ENCODE measurements at regions of chr18 and their contacts with region 1.

Region 1: GRCh38 chr18:58493516-58494253 is 135.2 kb downstream of the ALPK2 start:
- DNase-seq: peak; percentile 68 to 80 (median 78)
- ATAC-seq: peak; percentile 98
- H3K4me3 ChIP-seq: no peak overlapping the region
- H3K27ac ChIP-seq: no peak overlapping the region
- H3K4me1 ChIP-seq: no peaks in the 10 kb centered on the region
- H3K27me3 ChIP-seq: peaks cover 0 to 35% of the 10 kb centered on the region in 2 experiments; a peak in 3 of 5 replicates
- CTCF ChIP-seq: peak; percentile 62 to 75 (median 74)
- EP300 ChIP-seq: no peak
- POLR2A ChIP-seq: no peak
- RAD21 ChIP-seq: peak; percentile 45 to 66; a peak in 3 of 4 replicates

Region 2: DNA sequence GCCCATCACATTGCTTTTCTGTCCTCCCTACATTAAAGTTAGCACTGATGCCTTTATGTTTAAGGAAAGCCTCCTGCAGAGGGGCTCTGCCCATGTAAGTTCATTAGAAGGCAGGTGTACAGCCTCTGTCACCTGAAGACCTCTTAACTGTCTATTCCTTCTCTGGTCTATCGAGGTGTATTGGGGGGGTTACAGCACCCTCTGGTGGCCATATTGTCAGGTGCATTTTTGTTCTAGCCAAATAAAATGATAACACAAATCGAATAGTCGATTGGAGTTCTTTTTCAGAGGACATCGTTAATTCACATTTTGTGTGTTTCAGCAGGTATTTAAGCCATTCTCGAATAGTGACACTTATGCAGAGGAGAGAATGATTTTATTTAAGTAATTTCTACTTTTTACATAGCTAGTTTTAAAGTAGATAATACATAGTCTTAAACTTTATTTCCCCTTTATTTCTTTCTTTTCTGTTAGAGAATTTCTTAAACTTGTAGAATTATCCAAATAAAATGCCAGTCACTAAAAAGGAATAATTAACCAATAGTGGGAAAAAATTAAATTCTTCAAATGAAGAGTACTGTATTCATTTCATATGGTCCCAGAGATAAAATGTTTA is 312.8 kb before region 1 on chr18:
- CTCF ChIA-PET with region 1: no interaction called
- POLR2A ChIA-PET with region 1: no interaction called
- in situ Hi-C with region 1: loop called (anchors 25 kb)
- intact Hi-C with region 1: no loop called
- DNase-seq: peak; percentile 51 to 62 (median 57)
- ATAC-seq: peak; percentile 66
- H3K4me3 ChIP-seq: no peak overlapping the region
- H3K27ac ChIP-seq: no peak overlapping the region
- H3K4me1 ChIP-seq: peaks cover 0 to 6% of the 10 kb centered on the region in 2 experiments; a peak in 3 of 5 replicates
- H3K27me3 ChIP-seq: no peaks in the 10 kb centered on the region
- CTCF ChIP-seq: peak; percentile 54 to 77 (median 73)
- EP300 ChIP-seq: no peak
- POLR2A ChIP-seq: no peak
- RAD21 ChIP-seq: peak; percentile 59 to 75

Region 3: DNA sequence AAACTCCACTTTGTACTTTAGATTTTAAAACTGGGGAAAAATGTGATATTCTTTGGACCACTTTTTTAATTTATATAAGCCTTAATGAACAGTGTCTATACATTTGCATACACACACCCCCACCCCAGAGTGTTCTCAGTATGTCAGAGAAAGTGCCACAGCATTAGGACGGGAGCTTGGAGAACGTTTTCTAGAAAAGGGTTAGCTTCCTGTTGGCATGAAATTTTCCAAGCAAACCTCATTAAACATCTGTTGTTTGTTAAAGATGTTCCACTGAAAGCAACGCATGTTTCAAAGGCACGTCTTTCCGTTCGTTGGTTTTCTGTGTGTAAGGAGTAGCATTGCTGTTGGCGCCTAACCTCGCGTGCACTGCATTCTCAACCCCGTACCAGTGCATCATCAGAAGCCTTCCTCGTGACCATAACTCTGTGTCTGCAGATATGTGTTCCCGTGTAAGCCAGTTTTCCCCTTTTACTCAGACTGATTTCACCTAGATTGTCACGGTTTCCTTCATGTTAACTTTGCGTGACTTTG is 93.3 kb before region 1 on chr18:
- CTCF ChIA-PET with region 1: interaction called, 3 read pairs
- POLR2A ChIA-PET with region 1: no interaction called
- in situ Hi-C with region 1: no loop called
- intact Hi-C with region 1: loop called (anchors 2 kb)
- DNase-seq: no peak
- ATAC-seq: no peak
- H3K4me3 ChIP-seq: no peak overlapping the region
- H3K27ac ChIP-seq: no peak overlapping the region
- H3K4me1 ChIP-seq: no peaks in the 10 kb centered on the region
- H3K27me3 ChIP-seq: peaks cover 5 to 13% of the 10 kb centered on the region in 2 experiments; a peak in 3 of 5 replicates
- CTCF ChIP-seq: no peak
- EP300 ChIP-seq: no peak
- POLR2A ChIP-seq: no peak
- RAD21 ChIP-seq: no peak

Region 4: DNA sequence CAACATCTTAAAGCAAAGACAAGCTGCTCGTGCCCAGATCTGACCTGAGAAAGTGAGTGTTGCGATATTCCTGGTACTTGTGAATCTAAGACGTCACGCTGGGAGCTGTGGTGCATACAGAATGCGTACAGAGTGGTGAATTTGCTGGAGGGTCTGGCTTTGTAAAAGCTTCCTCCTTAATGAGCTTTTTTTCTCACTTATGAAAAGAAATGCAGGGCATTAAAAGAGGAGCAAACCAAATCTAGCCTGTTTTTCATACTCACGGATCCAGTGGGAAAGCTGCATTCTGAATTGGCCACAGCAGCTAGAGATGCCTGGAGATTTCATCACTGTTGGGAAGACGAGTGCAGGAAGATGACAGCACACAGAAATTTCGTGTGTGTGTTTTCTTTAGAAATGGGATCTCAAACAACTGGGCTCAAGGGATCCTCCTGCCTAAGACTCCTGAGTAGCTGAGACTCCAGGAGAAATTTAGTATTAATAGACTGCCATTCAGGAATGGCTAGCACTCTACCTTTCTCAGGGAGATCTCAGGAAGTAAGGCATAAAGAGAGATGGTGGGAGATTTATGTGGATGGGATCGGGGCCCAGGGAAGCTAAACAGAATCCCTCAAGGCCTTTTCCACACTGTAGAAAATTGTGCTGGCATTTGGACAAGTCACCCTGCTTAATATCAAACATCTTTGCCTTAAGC is 46.1 kb before region 1 on chr18:
- CTCF ChIA-PET with region 1: no interaction called
- POLR2A ChIA-PET with region 1: no interaction called
- in situ Hi-C with region 1: no loop called
- intact Hi-C with region 1: loop called (anchors 10 kb)
- DNase-seq: no peak
- ATAC-seq: no peak
- H3K4me3 ChIP-seq: no peak overlapping the region
- H3K27ac ChIP-seq: no peak overlapping the region
- H3K4me1 ChIP-seq: no peaks in the 10 kb centered on the region
- H3K27me3 ChIP-seq: peaks cover 3 to 17% of the 10 kb centered on the region in 2 experiments; a peak in 4 of 5 replicates
- CTCF ChIP-seq: no peak
- EP300 ChIP-seq: no peak
- POLR2A ChIP-seq: no peak
- RAD21 ChIP-seq: no peak

Measured in K562 (cell line).